Prostate gland (tissue), 2 donors: ENCODE measurements at regions of chr14 and their contacts with region 1.

Region 1: GRCh38 chr14:92121670-92122350 is at the starts of genes CPSF2 and NDUFB1:
- DNase-seq: peak; percentile 81
- H3K4me3 ChIP-seq: peak within 1 kb of the TSS; percentile 80 to 94
- H3K27ac ChIP-seq: peak within 1 kb of the TSS; percentile 86 to 87
- H3K4me1 ChIP-seq: no peaks in the 10 kb centered on the region
- H3K27me3 ChIP-seq: no peaks in the 10 kb centered on the region
- CTCF ChIP-seq: peak in 2 of 4 experiments; percentile 19 to 32
- POLR2A ChIP-seq: peak; percentile 63
- total RNA-seq, gene CPSF2: 25.4 to 74.5 TPM
- total RNA-seq, gene NDUFB1: 211 to 351 TPM

Region 2: DNA sequence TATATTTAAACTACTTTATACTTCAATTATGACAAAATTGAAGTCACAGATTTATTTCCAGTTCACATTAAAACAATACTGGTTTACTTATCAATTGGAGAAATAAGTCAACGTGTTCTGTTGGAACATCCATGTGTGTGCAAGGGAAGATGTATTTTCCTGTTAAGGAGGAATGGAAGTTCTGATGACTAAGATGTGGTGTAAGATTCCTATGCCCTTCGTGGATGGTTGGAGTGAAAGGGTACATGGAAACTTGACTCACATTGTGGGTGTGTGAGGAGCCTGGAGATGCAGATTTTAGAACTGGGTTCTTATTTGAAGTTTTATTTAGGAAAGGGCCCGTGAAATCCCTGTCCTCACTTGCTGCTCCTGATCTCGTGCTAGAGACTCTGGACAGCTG is 485.2 kb before region 1 on chr14:
- intact Hi-C with region 1: no loop called
- DNase-seq: no peak
- H3K4me3 ChIP-seq: no peak overlapping the region
- H3K27ac ChIP-seq: no peak overlapping the region
- H3K4me1 ChIP-seq: no peaks in the 10 kb centered on the region
- H3K27me3 ChIP-seq: no peaks in the 10 kb centered on the region
- CTCF ChIP-seq: no peak
- POLR2A ChIP-seq: no peak

Region 3: GRCh38 chr14:91830777-91831176 is 291.0 kb before region 1 on chr14:
- intact Hi-C with region 1: no loop called
- DNase-seq: peak; percentile 30
- H3K4me3 ChIP-seq: no peak overlapping the region
- H3K27ac ChIP-seq: peak overlapping the region; percentile 58 to 62
- H3K4me1 ChIP-seq: peaks cover 2% of the 10 kb centered on the region
- H3K27me3 ChIP-seq: no peaks in the 10 kb centered on the region
- CTCF ChIP-seq: no peak
- POLR2A ChIP-seq: no peak

Region 4: GRCh38 chr14:92106143-92106926 is 15.5 kb before region 1 on chr14 and contains the start of gene ATXN3:
- intact Hi-C with region 1: loop called (anchors 2 kb)
- DNase-seq: peak; percentile 98
- H3K4me3 ChIP-seq: peak within 1 kb of the TSS; percentile 96 to 99
- H3K27ac ChIP-seq: peak within 1 kb of the TSS; percentile 96 to 98
- H3K4me1 ChIP-seq: peaks cover 3% of the 10 kb centered on the region
- H3K27me3 ChIP-seq: no peaks in the 10 kb centered on the region
- CTCF ChIP-seq: peak; percentile 64 to 90 (median 87)
- POLR2A ChIP-seq: peak; percentile 65
- total RNA-seq, gene ATXN3: 45.1 to 53.5 TPM

Region 5: GRCh38 chr14:92259613-92260357 is 138.0 kb after region 1 on chr14:
- intact Hi-C with region 1: no loop called
- DNase-seq: no peak
- H3K4me3 ChIP-seq: no peak overlapping the region
- H3K27ac ChIP-seq: no peak overlapping the region
- H3K4me1 ChIP-seq: no peaks in the 10 kb centered on the region
- H3K27me3 ChIP-seq: peaks cover 3% of the 10 kb centered on the region
- CTCF ChIP-seq: no peak
- POLR2A ChIP-seq: no peak

Region 6: DNA sequence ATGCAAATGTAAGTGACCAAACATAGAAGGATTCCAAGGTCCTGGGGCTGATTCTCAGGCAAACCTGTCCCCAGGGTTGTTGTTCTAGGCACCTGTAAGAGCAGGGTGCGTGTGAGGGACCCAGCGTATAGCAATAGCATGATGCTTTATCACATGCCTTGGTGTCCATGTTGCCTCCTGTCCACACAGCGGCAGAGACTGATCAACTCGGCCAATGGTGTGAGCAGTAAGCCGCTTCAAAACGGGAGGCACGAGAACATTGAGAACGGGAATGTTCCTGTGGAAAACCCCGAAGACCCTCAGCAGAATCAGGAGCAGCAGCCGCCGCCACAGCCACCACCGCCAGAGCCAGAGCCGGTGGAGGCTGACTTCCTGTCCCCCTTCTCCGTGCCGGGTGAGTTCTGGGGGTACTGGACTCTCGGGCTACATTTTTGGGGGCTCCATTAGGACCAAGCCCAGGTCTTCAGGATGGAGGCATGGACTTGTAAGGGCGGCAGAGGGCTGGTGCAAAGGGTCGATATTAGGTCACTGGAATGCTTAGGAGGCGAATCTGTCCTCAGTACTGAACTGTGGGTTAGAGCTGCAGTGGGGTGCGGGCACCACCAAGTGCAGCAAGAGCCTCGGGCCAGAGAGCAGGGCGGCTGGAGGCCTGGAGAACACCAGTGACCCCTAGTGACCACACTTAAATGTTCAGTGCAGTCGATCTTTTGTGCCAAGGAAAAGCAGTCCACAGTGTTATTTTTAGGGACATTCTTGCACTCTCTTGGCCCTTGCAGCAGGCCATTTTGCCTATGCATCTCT is 334.6 kb after region 1 on chr14:
- intact Hi-C with region 1: loop called (anchors 5 kb)
- DNase-seq: peak; percentile 35
- H3K4me3 ChIP-seq: no peak overlapping the region
- H3K27ac ChIP-seq: no peak overlapping the region
- H3K4me1 ChIP-seq: no peaks in the 10 kb centered on the region
- H3K27me3 ChIP-seq: no peaks in the 10 kb centered on the region
- CTCF ChIP-seq: peak in 3 of 4 experiments; percentile 52 to 69 (median 58)
- POLR2A ChIP-seq: no peak

Region 7: DNA sequence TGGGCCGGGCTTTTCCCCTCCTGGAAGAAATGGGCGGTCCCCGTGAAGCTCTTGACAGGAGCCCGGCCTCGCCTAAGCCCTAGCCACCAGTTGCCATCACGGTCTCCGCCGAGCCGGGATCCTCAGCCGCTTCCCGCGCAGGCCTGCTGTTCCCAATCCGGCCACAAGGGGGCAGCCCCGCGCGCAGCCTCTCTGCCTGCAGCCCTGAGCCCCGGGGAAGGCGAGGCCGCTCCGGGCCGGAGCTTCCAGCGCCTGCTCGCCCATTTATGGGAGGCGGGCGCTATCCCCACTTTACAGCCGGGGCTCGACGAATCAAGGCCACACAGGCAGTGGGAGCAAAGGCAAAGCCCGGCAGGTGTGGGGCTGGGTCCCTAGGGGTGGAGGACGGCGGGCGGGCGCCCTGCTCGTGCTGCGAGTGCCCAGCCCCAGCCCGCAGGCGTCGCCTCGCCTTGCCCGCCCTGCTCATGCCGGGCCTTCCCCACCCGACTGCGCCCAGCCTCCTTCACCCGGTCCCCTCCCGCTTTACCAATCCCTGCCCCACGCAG is 565.2 kb after region 1 on chr14:
- intact Hi-C with region 1: loop called (anchors 10 kb)
- DNase-seq: peak; percentile 69
- H3K4me3 ChIP-seq: peak overlapping the region; percentile 18 to 33
- H3K27ac ChIP-seq: peak overlapping the region in 1 of 2 donors; percentile 0
- H3K4me1 ChIP-seq: peaks cover 2% of the 10 kb centered on the region
- H3K27me3 ChIP-seq: no peaks in the 10 kb centered on the region
- CTCF ChIP-seq: peak; percentile 71 to 94 (median 83)
- POLR2A ChIP-seq: no peak

Region 8: GRCh38 chr14:92783816-92784431 is 662.1 kb after region 1 on chr14:
- intact Hi-C with region 1: loop called (anchors 10 kb)
- DNase-seq: peak; percentile 54
- H3K4me3 ChIP-seq: no peak overlapping the region
- H3K27ac ChIP-seq: peak overlapping the region in 1 of 2 donors; percentile 57
- H3K4me1 ChIP-seq: no peaks in the 10 kb centered on the region
- H3K27me3 ChIP-seq: no peaks in the 10 kb centered on the region
- CTCF ChIP-seq: peak in 3 of 4 experiments; percentile 76 to 86 (median 80)
- POLR2A ChIP-seq: no peak